ENCODE measurements at regions of chr9 and their contacts with region 1.

Region 1: GRCh38 chr9:121121582-121122087 is 46.9 kb downstream of the CNTRL start:
- DNase-seq: peak; percentile 84
- ATAC-seq: peak; percentile 99
- H3K4me3 Mint-ChIP-seq: peak overlapping the region; percentile 91
- H3K27ac Mint-ChIP-seq: peak overlapping the region; percentile 95
- H3K4me1 Mint-ChIP-seq: peaks cover 45% of the 10 kb centered on the region
- H3K27me3 Mint-ChIP-seq: no peaks in the 10 kb centered on the region
- CTCF ChIP-seq: no peak

Region 2: DNA sequence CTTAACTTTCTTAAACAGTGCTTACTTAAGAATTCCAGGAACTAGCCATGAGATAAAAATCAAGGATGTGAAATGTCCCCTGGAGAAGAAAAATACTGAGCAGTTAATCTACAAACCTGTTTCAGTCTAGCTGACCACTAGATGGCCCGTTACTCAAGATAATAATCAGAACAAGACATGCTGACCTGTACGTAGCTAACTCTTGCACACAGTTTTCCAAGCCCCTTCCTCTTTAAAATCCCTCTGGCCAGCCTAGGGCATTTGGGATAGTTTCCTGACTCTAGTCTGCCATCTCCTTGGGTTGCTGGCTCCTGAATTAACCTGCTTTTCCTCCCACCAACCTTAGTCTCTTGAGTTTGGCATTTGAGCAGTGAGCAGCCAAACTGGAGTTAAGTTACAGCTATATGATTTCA is 135.8 kb before region 1 on chr9:
- CTCF ChIA-PET with region 1: interaction called, 6 read pairs
- POLR2A ChIA-PET with region 1: no interaction called
- intact Hi-C with region 1: loop called (anchors 1 kb)
- DNase-seq: no peak
- ATAC-seq: no peak
- H3K4me3 Mint-ChIP-seq: no peak overlapping the region
- H3K27ac Mint-ChIP-seq: no peak overlapping the region
- H3K4me1 Mint-ChIP-seq: no peaks in the 10 kb centered on the region
- H3K27me3 Mint-ChIP-seq: no peaks in the 10 kb centered on the region
- CTCF ChIP-seq: no peak

Region 3: GRCh38 chr9:121059998-121060636 is 61.5 kb before region 1 on chr9:
- CTCF ChIA-PET with region 1: interaction called, 10 read pairs
- POLR2A ChIA-PET with region 1: no interaction called
- intact Hi-C with region 1: no loop called
- DNase-seq: no peak
- ATAC-seq: peak; percentile 67
- H3K4me3 Mint-ChIP-seq: no peak overlapping the region
- H3K27ac Mint-ChIP-seq: no peak overlapping the region
- H3K4me1 Mint-ChIP-seq: peaks cover 5% of the 10 kb centered on the region
- H3K27me3 Mint-ChIP-seq: no peaks in the 10 kb centered on the region
- CTCF ChIP-seq: peak; percentile 56

Region 4: DNA sequence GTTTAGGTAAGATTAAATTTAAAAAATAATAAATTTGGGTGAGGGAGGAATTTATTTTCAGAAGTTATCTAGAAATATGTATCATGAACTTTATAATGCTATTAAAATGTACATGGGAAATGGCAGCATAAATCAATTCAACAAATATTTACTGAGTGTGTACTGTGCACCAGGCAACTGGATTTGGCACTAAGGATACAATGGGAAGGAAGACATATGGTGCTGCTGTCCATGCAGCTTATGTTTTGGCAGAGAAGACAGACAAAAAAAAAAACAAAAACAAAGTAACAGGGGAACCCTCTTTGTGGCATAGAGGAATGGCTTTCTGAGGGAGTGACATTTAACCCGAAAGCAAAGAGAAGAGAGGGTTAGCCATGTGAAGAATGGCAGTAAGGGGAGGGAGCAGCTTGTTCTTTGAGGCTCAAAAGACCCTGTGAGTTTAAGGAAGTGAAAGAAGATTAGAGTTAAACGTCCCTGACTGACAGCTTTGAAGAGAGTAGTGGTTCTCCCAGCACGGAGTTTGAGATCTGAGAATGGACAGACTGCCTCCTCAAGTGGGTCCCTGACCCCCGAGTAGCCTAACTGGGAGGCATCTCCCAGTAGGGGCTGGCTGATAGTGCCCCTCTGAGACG is 23.0 kb before region 1 on chr9:
- CTCF ChIA-PET with region 1: interaction called, 3 read pairs
- POLR2A ChIA-PET with region 1: interaction called, 6 read pairs
- intact Hi-C with region 1: loop called (anchors 1 kb)
- DNase-seq: no peak
- ATAC-seq: peak; percentile 99
- H3K4me3 Mint-ChIP-seq: peak overlapping the region; percentile 50
- H3K27ac Mint-ChIP-seq: peak overlapping the region; percentile 75
- H3K4me1 Mint-ChIP-seq: peaks cover 25% of the 10 kb centered on the region
- H3K27me3 Mint-ChIP-seq: no peaks in the 10 kb centered on the region
- CTCF ChIP-seq: no peak

Region 5: DNA sequence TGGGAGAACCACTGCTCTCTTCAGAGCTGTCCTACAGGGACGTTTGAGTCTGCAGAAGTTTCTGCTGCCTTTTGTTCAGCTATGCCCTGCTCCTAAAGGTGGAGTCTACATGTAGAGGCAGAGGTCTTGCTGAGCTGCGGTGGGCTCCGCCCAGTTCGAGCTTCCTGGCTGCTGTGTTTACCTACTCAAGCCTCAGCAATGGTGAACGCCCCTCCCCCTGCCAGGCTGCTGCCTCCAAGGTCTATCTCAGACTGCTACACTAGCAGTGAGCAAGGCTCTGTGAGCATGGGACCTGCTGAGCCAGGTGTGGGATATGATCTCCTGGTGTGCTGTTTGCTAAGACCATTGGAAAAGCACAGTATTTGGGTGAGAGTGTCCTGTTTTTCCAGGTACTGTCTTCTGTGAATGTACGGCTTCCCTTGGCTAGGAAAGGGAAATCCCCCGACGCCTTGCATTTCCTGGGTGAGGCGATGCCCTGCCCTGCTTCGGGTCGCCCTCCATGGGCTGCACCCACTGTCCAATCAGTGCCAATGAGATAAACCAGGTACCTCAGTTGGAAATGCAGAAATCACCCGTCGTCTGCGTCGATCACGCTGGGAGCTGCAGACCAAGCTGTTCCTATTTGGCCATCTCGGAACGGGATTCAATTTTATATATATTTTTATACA is 11.6 kb after region 1 on chr9:
- CTCF ChIA-PET with region 1: interaction called, 4 read pairs
- POLR2A ChIA-PET with region 1: interaction called, 14 read pairs
- intact Hi-C with region 1: loop called (anchors 1 kb)
- DNase-seq: peak; percentile 19
- ATAC-seq: peak; percentile 71
- H3K4me3 Mint-ChIP-seq: peak overlapping the region; percentile 41
- H3K27ac Mint-ChIP-seq: peak overlapping the region; percentile 65
- H3K4me1 Mint-ChIP-seq: peaks cover 59% of the 10 kb centered on the region
- H3K27me3 Mint-ChIP-seq: no peaks in the 10 kb centered on the region
- CTCF ChIP-seq: no peak

Region 6: GRCh38 chr9:121156263-121156731 is 34.7 kb after region 1 on chr9:
- CTCF ChIA-PET with region 1: interaction called, 6 read pairs
- POLR2A ChIA-PET with region 1: interaction called, 4 read pairs
- intact Hi-C with region 1: loop called (anchors 2 kb)
- DNase-seq: no peak
- ATAC-seq: peak; percentile 87
- H3K4me3 Mint-ChIP-seq: peak overlapping the region; percentile 67
- H3K27ac Mint-ChIP-seq: peak overlapping the region; percentile 92
- H3K4me1 Mint-ChIP-seq: peaks cover 67% of the 10 kb centered on the region
- H3K27me3 Mint-ChIP-seq: no peaks in the 10 kb centered on the region
- CTCF ChIP-seq: no peak

Measured in activated B cell treated with CpG ODN at 0.5 μM for 24 hours (primary cell).